ENCODE measurements at regions of chr2 and their contacts with region 1.

Region 1: GRCh38 chr2:203327901-203328759 is at the start of gene ABI2:
- DNase-seq: peak; percentile 89 to 93 (median 91)
- ATAC-seq: peak; percentile 82 to 97 (median 95)
- H3K4me3 ChIP-seq: peak within 1 kb of the TSS; percentile 66 to 100 (median 92)
- H3K27ac ChIP-seq: peak within 1 kb of the TSS; percentile 39 to 94 (median 87)
- H3K4me1 ChIP-seq: peaks cover 0 to 37% (median 18%) of the 10 kb centered on the region in 12 donors
- H3K27me3 ChIP-seq: no peaks in the 10 kb centered on the region
- CTCF ChIP-seq: peak in 1 of 12 donors; percentile 11
- POLR2A ChIP-seq: peak in 1 of 2 donors; percentile 35
- total RNA-seq, gene ABI2: 35.4 to 78.8 (median 53.5) TPM

Region 2: GRCh38 chr2:203366639-203367465 is 38.7 kb after region 1 on chr2:
- intact Hi-C with region 1: loop called in 1 of 10 experiments (anchors 5 kb)
- DNase-seq: no peak
- ATAC-seq: no peak
- H3K4me3 ChIP-seq: no peak overlapping the region
- H3K27ac ChIP-seq: no peak overlapping the region
- H3K4me1 ChIP-seq: peaks cover 0 to 20% (median 8%) of the 10 kb centered on the region in 12 donors
- H3K27me3 ChIP-seq: no peaks in the 10 kb centered on the region
- CTCF ChIP-seq: no peak
- POLR2A ChIP-seq: no peak

Region 3: DNA sequence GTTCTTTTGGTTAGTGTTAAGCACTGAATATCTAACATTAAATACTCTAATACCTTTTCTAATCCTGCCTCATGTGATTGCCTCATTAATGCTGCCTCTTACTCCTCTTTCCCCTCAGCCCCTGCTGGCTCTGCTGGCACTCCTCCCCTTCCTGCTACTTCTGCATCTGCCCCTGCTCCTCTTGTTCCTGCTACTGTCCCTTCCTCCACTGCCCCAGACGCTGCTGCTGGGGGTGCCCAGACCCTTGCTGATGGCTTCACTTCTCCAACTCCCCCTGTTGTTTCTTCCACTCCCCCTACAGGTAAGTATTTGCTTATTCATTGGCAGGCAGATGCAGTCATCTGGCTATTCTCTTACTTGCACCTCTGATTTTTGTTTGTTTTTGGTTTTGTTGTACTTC is 68.5 kb after region 1 on chr2:
- intact Hi-C with region 1: loop called in 1 of 10 experiments (anchors 10 kb)
- DNase-seq: no peak
- ATAC-seq: peak in 2 of 4 donors; percentile 29 to 56
- H3K4me3 ChIP-seq: no peak overlapping the region
- H3K27ac ChIP-seq: no peak overlapping the region
- H3K4me1 ChIP-seq: peaks cover 0 to 5% (median 0%) of the 10 kb centered on the region in 12 donors
- H3K27me3 ChIP-seq: no peaks in the 10 kb centered on the region
- CTCF ChIP-seq: peak in 8 of 12 donors; percentile 10 to 38 (median 24)
- POLR2A ChIP-seq: no peak

Region 4: DNA sequence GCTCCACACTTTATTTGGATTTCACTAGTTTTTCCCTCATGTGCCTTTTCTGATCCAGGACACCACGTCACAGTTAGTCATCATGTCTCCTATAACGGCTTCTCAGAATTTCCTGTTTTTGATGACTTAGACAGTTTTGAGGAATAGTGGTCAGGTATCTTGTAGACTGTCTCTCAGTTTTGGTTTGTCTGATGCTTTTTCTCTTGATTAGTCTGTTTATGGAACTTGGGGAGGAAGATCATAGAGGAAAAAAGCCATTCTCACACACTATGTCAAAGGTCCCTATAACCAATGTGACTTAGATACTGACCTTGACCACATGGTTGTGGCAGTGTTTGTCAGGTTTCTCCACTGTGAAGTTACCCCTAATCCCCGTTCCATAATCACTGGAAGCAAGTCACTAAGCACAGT is 117.9 kb after region 1 on chr2:
- intact Hi-C with region 1: loop called in 1 of 10 experiments (anchors 10 kb)
- DNase-seq: no peak
- ATAC-seq: no peak
- H3K4me3 ChIP-seq: no peak overlapping the region
- H3K27ac ChIP-seq: no peak overlapping the region
- H3K4me1 ChIP-seq: peaks cover 0 to 27% (median 8%) of the 10 kb centered on the region in 12 donors
- H3K27me3 ChIP-seq: no peaks in the 10 kb centered on the region
- CTCF ChIP-seq: no peak
- POLR2A ChIP-seq: no peak

Region 5: DNA sequence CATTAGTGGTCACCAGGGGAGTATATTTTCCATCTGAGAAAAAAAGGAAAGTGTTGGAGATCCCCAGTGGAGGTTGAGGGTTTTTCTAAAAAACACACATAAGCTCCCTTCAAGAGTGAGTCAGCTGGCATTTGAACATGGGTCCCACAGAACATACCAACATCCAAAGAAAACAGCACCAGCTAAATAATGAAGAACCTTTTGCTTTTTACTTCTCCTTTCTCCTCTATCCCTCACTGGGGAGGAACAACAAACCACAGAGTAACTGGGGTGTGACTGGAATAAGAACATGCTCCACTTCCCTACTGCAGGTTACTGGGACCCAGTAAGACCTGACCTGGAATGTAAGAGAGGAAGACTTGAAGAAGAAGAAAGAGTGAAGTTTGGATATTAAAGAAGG is 263.5 kb after region 1 on chr2:
- intact Hi-C with region 1: no loop called
- DNase-seq: no peak
- ATAC-seq: peak in 1 of 4 donors; percentile 41
- H3K4me3 ChIP-seq: no peak overlapping the region
- H3K27ac ChIP-seq: no peak overlapping the region
- H3K4me1 ChIP-seq: peaks cover 0 to 9% (median 0%) of the 10 kb centered on the region in 12 donors
- H3K27me3 ChIP-seq: no peaks in the 10 kb centered on the region
- CTCF ChIP-seq: no peak
- POLR2A ChIP-seq: no peak

Measured in heart left ventricle (tissue), 16 donors.